Spleen (tissue), 13 donors: ENCODE measurements at regions of chr20 and their contacts with region 1.

Region 1: GRCh38 chr20:60210779-60211617 is 252.8 kb downstream of the CDH26 start:
- DNase-seq: peak; percentile 89
- H3K4me3 ChIP-seq: no peak overlapping the region
- H3K27ac ChIP-seq: no peak overlapping the region
- H3K4me1 ChIP-seq: peaks cover 0 to 12% (median 4%) of the 10 kb centered on the region in 6 donors
- H3K27me3 ChIP-seq: peaks cover 0 to 8% (median 0%) of the 10 kb centered on the region in 7 donors
- CTCF ChIP-seq: peak; percentile 62 to 92 (median 80)
- POLR2A ChIP-seq: no peak

Region 2: GRCh38 chr20:60632391-60633262 is 421.6 kb after region 1 on chr20:
- intact Hi-C with region 1: no loop called
- DNase-seq: no peak
- H3K4me3 ChIP-seq: no peak overlapping the region
- H3K27ac ChIP-seq: no peak overlapping the region
- H3K4me1 ChIP-seq: no peaks in the 10 kb centered on the region
- H3K27me3 ChIP-seq: no peaks in the 10 kb centered on the region
- CTCF ChIP-seq: no peak
- POLR2A ChIP-seq: no peak

Region 3: GRCh38 chr20:61220160-61220559 is 1009.2 kb after region 1 on chr20:
- intact Hi-C with region 1: loop called (anchors 10 kb)
- DNase-seq: no peak
- H3K4me3 ChIP-seq: no peak overlapping the region
- H3K27ac ChIP-seq: no peak overlapping the region
- H3K4me1 ChIP-seq: no peaks in the 10 kb centered on the region
- H3K27me3 ChIP-seq: peaks cover 0 to 48% (median 0%) of the 10 kb centered on the region in 7 donors
- CTCF ChIP-seq: no peak
- POLR2A ChIP-seq: no peak